CD8-positive, alpha-beta T cell (primary cell): ENCODE measurements at regions of chr16 and their contacts with region 1.

Region 1: DNA sequence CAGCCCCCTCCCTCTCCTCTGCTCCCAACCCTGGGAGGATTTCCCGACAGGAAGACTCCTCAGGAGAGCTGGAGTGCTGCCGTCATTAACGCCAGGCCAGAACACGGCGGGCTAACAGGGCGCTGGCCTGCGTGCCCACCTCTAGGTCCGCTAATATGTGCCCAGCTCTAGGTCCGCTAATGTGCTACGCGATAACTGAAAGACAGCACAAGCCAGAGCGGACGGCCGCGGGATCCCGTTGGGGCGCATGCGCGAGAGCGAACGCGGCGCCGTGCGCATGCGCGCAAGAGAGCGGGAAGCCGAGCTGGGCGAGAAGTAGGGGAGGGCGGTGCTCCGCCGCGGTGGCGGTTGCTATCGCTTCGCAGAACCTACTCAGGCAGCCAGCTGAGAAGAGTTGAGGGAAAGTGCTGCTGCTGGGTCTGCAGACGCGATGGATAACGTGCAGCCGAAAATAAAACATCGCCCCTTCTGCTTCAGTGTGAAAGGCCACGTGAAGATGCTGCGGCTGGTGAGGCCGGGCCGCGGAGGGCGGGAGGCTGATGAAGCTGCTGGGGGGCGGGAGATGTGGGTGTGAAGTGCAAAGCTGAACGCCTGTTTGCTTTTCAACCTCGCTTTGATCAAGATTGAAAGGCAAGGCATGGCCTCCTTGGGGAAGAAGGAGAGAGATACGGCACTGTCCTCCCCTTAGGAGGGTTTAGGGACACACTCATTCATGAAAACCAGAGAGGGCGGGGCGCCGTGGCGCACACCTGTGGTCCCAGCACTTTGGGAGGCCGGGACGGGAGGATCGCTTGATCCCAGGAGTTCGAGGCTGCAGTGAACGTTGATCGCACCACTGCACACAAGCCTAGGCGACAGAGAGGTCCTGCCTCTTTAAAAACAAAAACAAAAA is at the start of gene CKLF:
- DNase-seq: peak; percentile 83 to 96 (median 90)
- ATAC-seq: peak; percentile 66
- H3K4me3 ChIP-seq: peak within 1 kb of the TSS; percentile 88 to 95
- H3K4me3 Mint-ChIP-seq: peak within 1 kb of the TSS; percentile 94
- H3K27ac ChIP-seq: peak within 1 kb of the TSS; percentile 76 to 81
- H3K27ac Mint-ChIP-seq: peak within 1 kb of the TSS; percentile 91
- H3K4me1 ChIP-seq: peaks cover 66% of the 10 kb centered on the region
- H3K4me1 Mint-ChIP-seq: peaks cover 79% of the 10 kb centered on the region
- H3K27me3 ChIP-seq: no peaks in the 10 kb centered on the region
- H3K27me3 Mint-ChIP-seq: no peaks in the 10 kb centered on the region
- CTCF ChIP-seq: no peak
- total RNA-seq, gene CKLF: 7.9 to 11.1 TPM

Region 2: GRCh38 chr16:66483689-66484481 is 68.6 kb before region 1 on chr16:
- CTCF ChIA-PET with region 1: interaction called, 5 read pairs
- POLR2A ChIA-PET with region 1: no interaction called
- intact Hi-C with region 1: loop called in 1 of 2 experiments (anchors 2 kb)
- DNase-seq: peak; percentile 50 to 82 (median 76)
- ATAC-seq: peak; percentile 83
- H3K4me3 ChIP-seq: no peak overlapping the region
- H3K4me3 Mint-ChIP-seq: no peak overlapping the region
- H3K27ac ChIP-seq: no peak overlapping the region
- H3K27ac Mint-ChIP-seq: no peak overlapping the region
- H3K4me1 ChIP-seq: peaks cover 5% of the 10 kb centered on the region
- H3K4me1 Mint-ChIP-seq: peaks cover 16% of the 10 kb centered on the region
- H3K27me3 ChIP-seq: no peaks in the 10 kb centered on the region
- H3K27me3 Mint-ChIP-seq: no peaks in the 10 kb centered on the region
- CTCF ChIP-seq: peak; percentile 92

Region 3: DNA sequence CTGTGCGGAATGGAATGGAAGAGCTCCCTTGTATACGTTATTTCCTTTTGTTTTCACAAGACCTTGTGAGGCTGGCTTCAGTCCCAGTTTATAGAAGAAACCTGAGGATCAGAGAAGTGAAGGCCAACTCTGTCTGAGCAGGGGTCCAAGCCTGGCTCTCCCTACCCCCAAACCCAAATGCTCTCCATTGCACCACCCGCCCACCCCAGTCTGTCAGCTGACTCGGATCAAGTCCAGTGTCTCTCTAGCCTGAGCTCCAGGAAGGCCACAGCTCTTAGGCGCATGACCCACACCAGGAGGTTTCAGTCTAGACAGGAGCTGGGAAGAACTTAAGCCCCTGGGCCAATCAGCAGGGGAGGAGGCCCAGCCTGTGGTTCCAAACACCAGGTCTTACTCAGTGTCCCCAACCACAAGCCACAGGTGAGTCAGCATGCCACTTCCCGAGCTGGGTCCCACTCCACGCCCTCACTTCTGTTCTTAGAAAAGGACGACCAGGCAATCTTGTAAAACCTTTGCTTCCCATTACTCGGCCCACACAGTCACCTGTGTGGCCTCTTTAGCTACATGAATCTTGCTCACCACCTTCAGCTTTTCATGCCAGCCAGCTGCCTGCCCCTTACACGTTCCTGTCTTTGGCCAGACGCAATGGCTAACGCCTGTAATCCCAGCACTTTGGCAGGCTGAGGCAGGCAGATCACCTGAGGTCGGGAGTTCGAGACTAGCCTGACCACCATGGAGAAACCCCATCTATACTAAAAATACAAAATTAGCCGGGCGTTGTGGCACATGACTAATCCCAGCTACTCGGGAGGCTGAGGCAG is 30.4 kb before region 1 on chr16:
- CTCF ChIA-PET with region 1: interaction called, 46 read pairs
- POLR2A ChIA-PET with region 1: interaction called, 72 read pairs
- intact Hi-C with region 1: loop called (anchors 1 kb)
- DNase-seq: peak; percentile 17 to 91 (median 85)
- ATAC-seq: peak; percentile 82
- H3K4me3 ChIP-seq: peak overlapping the region in 1 of 2 experiments; percentile 21
- H3K4me3 Mint-ChIP-seq: peak overlapping the region; percentile 66
- H3K27ac ChIP-seq: peak overlapping the region in 1 of 2 experiments; percentile 58
- H3K27ac Mint-ChIP-seq: peak overlapping the region; percentile 95
- H3K4me1 ChIP-seq: peaks cover 72% of the 10 kb centered on the region
- H3K4me1 Mint-ChIP-seq: peaks cover 80% of the 10 kb centered on the region
- H3K27me3 ChIP-seq: no peaks in the 10 kb centered on the region
- H3K27me3 Mint-ChIP-seq: no peaks in the 10 kb centered on the region
- CTCF ChIP-seq: no peak

Region 4: DNA sequence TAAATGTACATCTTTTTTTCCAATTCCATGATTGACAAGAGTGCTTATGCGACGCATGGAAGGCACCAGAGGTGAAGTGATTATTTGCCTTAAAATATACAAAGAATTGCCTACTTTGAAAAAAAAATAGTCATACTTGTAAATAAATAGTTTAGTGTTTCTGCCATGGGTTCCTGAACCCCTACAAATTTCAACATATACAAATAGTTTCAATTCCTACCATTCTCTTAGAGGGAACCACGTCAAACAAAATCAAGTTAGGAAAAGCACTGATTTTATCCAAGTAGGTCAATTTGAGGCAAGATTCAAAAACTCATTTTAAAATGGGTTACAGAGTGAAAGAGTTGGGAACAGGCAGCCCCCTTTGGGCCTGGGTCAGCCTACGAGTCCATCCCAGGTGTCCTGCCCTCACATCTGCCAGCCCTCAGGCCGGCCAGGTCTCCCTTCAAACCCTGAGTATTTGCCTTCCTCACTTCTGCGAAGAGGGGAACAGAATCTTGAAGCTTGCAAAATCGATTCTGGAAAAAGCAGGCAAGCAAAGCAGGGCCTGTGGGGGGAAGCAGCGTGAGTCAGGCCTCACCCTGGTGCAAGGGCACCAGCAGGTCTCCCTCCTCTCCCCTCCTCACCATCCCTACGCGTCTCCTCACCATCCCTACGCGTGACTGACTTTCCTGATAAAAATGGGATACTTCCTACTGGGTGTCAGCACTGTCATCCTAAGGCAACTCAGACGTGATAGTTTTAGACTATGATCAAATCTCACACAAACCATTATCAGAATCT is 63.8 kb after region 1 on chr16:
- CTCF ChIA-PET with region 1: no interaction called
- POLR2A ChIA-PET with region 1: no interaction called
- intact Hi-C with region 1: no loop called
- DNase-seq: no peak
- ATAC-seq: no peak
- H3K4me3 ChIP-seq: no peak overlapping the region
- H3K4me3 Mint-ChIP-seq: no peak overlapping the region
- H3K27ac ChIP-seq: no peak overlapping the region
- H3K27ac Mint-ChIP-seq: no peak overlapping the region
- H3K4me1 ChIP-seq: no peaks in the 10 kb centered on the region
- H3K4me1 Mint-ChIP-seq: peaks cover 2% of the 10 kb centered on the region
- H3K27me3 ChIP-seq: no peaks in the 10 kb centered on the region
- H3K27me3 Mint-ChIP-seq: no peaks in the 10 kb centered on the region
- CTCF ChIP-seq: no peak

Region 5: GRCh38 chr16:66639091-66639885 is 86.8 kb after region 1 on chr16:
- CTCF ChIA-PET with region 1: no interaction called
- POLR2A ChIA-PET with region 1: no interaction called
- intact Hi-C with region 1: no loop called
- DNase-seq: no peak
- ATAC-seq: no peak
- H3K4me3 ChIP-seq: no peak overlapping the region
- H3K4me3 Mint-ChIP-seq: no peak overlapping the region
- H3K27ac ChIP-seq: no peak overlapping the region
- H3K27ac Mint-ChIP-seq: no peak overlapping the region
- H3K4me1 ChIP-seq: no peaks in the 10 kb centered on the region
- H3K4me1 Mint-ChIP-seq: no peaks in the 10 kb centered on the region
- H3K27me3 ChIP-seq: no peaks in the 10 kb centered on the region
- H3K27me3 Mint-ChIP-seq: peaks cover 2% of the 10 kb centered on the region
- CTCF ChIP-seq: no peak

Region 6: GRCh38 chr16:66696669-66697630 is 144.4 kb after region 1 on chr16 and contains the start of gene CMTM4:
- CTCF ChIA-PET with region 1: no interaction called
- POLR2A ChIA-PET with region 1: no interaction called
- intact Hi-C with region 1: loop called in 1 of 2 experiments (anchors 5 kb)
- DNase-seq: peak; percentile 48 to 90 (median 75)
- ATAC-seq: peak; percentile 96
- H3K4me3 ChIP-seq: peak within 1 kb of the TSS; percentile 69 to 83
- H3K4me3 Mint-ChIP-seq: peak within 1 kb of the TSS; percentile 84
- H3K27ac ChIP-seq: no peak within 1 kb of the TSS
- H3K27ac Mint-ChIP-seq: peak within 1 kb of the TSS; percentile 41
- H3K4me1 ChIP-seq: peaks cover 19% of the 10 kb centered on the region
- H3K4me1 Mint-ChIP-seq: peaks cover 17% of the 10 kb centered on the region
- H3K27me3 ChIP-seq: no peaks in the 10 kb centered on the region
- H3K27me3 Mint-ChIP-seq: peaks cover 5% of the 10 kb centered on the region
- CTCF ChIP-seq: no peak
- total RNA-seq, gene CMTM4: 0.84 to 0.89 TPM

Region 7: DNA sequence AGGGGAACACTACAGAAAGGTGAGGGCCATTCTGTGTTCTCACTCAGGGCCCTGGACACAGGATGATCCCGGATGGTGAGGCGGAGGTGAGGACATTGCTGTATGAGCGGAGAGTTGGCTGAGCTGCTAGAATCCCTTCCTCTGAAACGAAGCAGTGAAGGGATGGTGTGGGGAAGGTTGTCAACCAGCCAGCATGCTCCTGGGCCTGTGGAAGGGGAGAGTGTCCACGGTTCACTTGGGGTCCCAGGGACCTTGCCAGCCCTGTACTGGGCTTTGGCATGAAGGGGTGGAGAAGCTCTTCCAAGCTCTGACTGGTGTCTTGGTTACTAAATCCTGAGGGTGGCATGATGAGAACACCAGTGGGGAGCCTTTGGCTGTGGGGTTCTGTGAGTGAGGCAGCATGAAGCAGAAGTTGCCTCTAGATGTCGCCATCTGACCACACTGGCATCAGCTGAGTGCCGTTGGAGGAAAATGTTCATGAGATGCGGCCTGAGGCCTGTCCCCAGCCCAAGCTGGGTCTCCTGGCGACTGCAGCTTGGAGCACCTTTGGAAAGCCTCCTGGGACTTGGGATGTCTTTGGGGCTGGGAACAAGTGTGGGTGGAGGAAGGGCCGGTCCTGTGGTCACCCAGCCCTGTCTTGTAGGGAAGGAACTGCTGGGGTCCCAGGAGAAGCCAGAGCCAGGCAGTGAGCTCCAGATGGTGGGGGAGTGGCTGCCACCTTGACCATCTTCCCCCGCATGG is 342.6 kb after region 1 on chr16:
- CTCF ChIA-PET with region 1: no interaction called
- POLR2A ChIA-PET with region 1: no interaction called
- intact Hi-C with region 1: no loop called
- DNase-seq: peak; percentile 16 to 74 (median 56)
- ATAC-seq: peak; percentile 94
- H3K4me3 ChIP-seq: no peak overlapping the region
- H3K4me3 Mint-ChIP-seq: no peak overlapping the region
- H3K27ac ChIP-seq: no peak overlapping the region
- H3K27ac Mint-ChIP-seq: no peak overlapping the region
- H3K4me1 ChIP-seq: peaks cover 3% of the 10 kb centered on the region
- H3K4me1 Mint-ChIP-seq: peaks cover 3% of the 10 kb centered on the region
- H3K27me3 ChIP-seq: no peaks in the 10 kb centered on the region
- H3K27me3 Mint-ChIP-seq: no peaks in the 10 kb centered on the region
- CTCF ChIP-seq: peak; percentile 49

Region 8: GRCh38 chr16:66905633-66906539 is 353.4 kb after region 1 on chr16:
- CTCF ChIA-PET with region 1: no interaction called
- POLR2A ChIA-PET with region 1: no interaction called
- intact Hi-C with region 1: no loop called
- DNase-seq: peak in 4 of 9 experiments; percentile 18 to 40 (median 33)
- ATAC-seq: no peak
- H3K4me3 ChIP-seq: no peak overlapping the region
- H3K4me3 Mint-ChIP-seq: no peak overlapping the region
- H3K27ac ChIP-seq: no peak overlapping the region
- H3K27ac Mint-ChIP-seq: no peak overlapping the region
- H3K4me1 ChIP-seq: no peaks in the 10 kb centered on the region
- H3K4me1 Mint-ChIP-seq: peaks cover 7% of the 10 kb centered on the region
- H3K27me3 ChIP-seq: no peaks in the 10 kb centered on the region
- H3K27me3 Mint-ChIP-seq: no peaks in the 10 kb centered on the region
- CTCF ChIP-seq: no peak